ENCODE measurements at regions of chr18 and their contacts with region 1.

Region 1: DNA sequence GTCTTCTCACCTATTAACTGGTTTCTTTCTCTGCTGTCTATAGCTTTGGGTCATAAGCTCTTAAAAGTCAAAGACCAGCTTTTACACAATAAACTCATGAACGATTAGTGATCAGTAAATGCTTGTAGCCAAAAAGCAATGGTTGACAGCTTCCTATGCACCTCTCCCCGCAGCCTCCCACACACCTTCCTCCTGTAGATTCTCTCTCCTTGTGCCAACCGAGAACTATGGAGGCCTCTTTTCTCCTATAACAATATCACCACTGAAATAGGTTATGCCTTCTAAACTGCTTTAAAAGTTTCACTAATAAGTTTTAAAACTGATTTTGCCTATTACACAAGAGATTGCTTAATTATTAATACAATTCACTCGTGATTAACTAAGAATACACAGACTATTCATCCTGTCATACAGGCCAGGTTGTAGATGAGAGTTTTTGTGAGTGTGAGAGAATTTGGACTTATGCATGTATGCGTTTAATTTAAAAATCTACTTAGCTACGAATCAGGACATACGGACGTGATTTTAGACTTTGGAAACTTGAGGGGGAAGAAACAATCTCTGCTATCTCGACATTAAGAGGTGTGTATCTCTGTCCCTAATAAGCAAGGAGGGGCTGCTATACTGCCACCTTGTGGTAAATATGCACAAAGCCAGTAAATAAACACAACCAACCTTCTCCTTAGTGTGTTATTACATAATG is 229.1 kb upstream of the RBBP8 start:
- DNase-seq: peak; percentile 70 to 79 (median 74)
- ATAC-seq: peak; percentile 87
- H3K4me3 ChIP-seq: no peak overlapping the region
- H3K27ac ChIP-seq: no peak overlapping the region
- H3K4me1 ChIP-seq: peaks cover 0 to 4% of the 10 kb centered on the region in 2 experiments; a peak in 1 of 5 replicates
- H3K27me3 ChIP-seq: no peaks in the 10 kb centered on the region; a peak in 1 of 5 replicates
- CTCF ChIP-seq: peak; percentile 64 to 88 (median 72); a peak in 5 of 6 replicates
- EP300 ChIP-seq: no peak
- POLR2A ChIP-seq: no peak
- RAD21 ChIP-seq: peak; percentile 65 to 90

Region 2: GRCh38 chr18:22169007-22169864 is 534.8 kb before region 1 on chr18 and contains the start of gene GATA6:
- CTCF ChIA-PET with region 1: no interaction called
- POLR2A ChIA-PET with region 1: no interaction called
- in situ Hi-C with region 1: no loop called
- intact Hi-C with region 1: loop called (anchors 5 kb)
- DNase-seq: peak; percentile 73 to 80 (median 76)
- ATAC-seq: peak; percentile 93
- H3K4me3 ChIP-seq: peak within 1 kb of the TSS; percentile 45
- H3K27ac ChIP-seq: no peak within 1 kb of the TSS
- H3K4me1 ChIP-seq: peaks cover 11 to 34% of the 10 kb centered on the region in 2 experiments
- H3K27me3 ChIP-seq: peaks cover 45 to 66% of the 10 kb centered on the region in 2 experiments
- CTCF ChIP-seq: peak; percentile 54 to 79 (median 63)
- EP300 ChIP-seq: no peak
- POLR2A ChIP-seq: no peak
- RAD21 ChIP-seq: peak; percentile 45 to 78
- polyA plus RNA-seq, gene GATA6: 0.01 TPM in 1 of 2 experiments, not detected in the other

Region 3: DNA sequence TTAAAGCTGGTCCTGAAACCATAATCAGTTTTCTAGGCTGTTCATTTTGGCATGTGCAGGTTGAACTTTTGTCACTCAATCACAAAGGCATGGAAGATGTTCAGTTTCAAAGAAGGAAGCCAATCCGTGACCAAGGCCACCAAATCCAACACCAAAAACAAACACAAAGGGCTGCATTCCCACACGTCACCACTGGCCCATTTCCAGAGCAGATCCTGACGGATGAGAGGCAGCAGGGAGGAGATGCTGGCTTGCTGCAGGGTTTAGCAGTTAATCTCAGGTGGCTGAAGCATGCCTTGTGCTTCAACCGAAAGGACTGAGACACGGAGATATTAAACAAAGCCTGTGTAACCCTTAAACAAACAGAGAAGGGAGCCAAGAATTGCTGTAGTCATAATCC is 94.4 kb before region 1 on chr18:
- CTCF ChIA-PET with region 1: no interaction called
- POLR2A ChIA-PET with region 1: no interaction called
- in situ Hi-C with region 1: no loop called
- intact Hi-C with region 1: loop called (anchors 5 kb)
- DNase-seq: peak in 1 of 4 experiments; percentile 15
- ATAC-seq: no peak
- H3K4me3 ChIP-seq: no peak overlapping the region
- H3K27ac ChIP-seq: no peak overlapping the region
- H3K4me1 ChIP-seq: no peaks in the 10 kb centered on the region
- H3K27me3 ChIP-seq: peaks cover 22 to 26% of the 10 kb centered on the region in 2 experiments
- CTCF ChIP-seq: no peak
- EP300 ChIP-seq: no peak
- POLR2A ChIP-seq: no peak
- RAD21 ChIP-seq: no peak

Region 4: DNA sequence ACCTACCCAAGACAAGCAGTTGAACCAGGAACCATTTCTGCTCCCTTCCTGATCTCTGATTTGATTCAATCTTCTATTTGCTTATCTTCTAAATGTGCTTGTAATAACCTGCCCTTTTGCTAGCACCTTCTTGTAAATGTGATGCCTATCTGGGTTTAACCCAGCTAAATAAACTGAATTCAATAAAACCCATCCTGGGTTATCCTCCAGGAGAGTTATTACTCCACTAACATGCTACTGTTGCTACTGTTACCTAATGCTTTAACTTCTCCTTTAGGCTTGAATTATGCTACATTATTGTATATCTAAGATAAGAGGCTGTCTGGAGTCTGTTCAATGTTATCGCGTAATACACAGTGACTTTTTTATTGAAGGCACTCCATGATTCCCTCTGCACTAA is 79.9 kb before region 1 on chr18:
- CTCF ChIA-PET with region 1: no interaction called
- POLR2A ChIA-PET with region 1: no interaction called
- in situ Hi-C with region 1: loop called (anchors 5 kb)
- intact Hi-C with region 1: no loop called
- DNase-seq: no peak
- ATAC-seq: no peak
- H3K4me3 ChIP-seq: no peak overlapping the region
- H3K27ac ChIP-seq: no peak overlapping the region
- H3K4me1 ChIP-seq: no peaks in the 10 kb centered on the region
- H3K27me3 ChIP-seq: peaks cover 0 to 5% of the 10 kb centered on the region in 2 experiments; a peak in 1 of 5 replicates
- CTCF ChIP-seq: no peak
- EP300 ChIP-seq: no peak
- POLR2A ChIP-seq: no peak
- RAD21 ChIP-seq: no peak

Region 5: DNA sequence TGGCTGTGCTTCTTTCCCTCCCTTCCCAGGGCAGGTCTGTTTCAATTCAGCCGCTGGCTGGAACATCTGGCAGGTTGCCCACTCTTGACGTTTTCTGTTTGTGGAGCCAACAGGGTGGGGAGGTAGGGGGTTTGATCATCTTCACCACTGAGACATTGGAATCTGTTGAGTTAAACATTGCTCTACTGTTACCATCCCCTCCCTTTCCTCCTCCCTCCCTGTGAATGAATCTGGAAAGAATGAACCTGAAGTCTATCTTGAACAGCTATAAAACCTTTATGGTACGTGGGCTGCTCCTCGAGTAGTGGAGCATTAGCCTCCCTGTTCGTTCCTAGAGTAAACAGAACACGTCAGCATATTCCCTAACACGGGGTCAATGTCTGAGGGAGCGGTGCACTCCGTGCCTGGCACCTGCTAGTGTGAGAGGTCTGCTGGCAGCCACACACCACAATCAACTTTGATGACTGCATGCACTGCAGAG is 20.8 kb before region 1 on chr18:
- CTCF ChIA-PET with region 1: no interaction called
- POLR2A ChIA-PET with region 1: no interaction called
- in situ Hi-C with region 1: no loop called
- intact Hi-C with region 1: no loop called
- DNase-seq: peak in 1 of 4 experiments; percentile 18
- ATAC-seq: no peak; the same call in 2 of the 3 replicates
- H3K4me3 ChIP-seq: no peak overlapping the region
- H3K27ac ChIP-seq: no peak overlapping the region
- H3K4me1 ChIP-seq: no peaks in the 10 kb centered on the region; a peak in 1 of 5 replicates
- H3K27me3 ChIP-seq: peaks cover 0 to 9% of the 10 kb centered on the region in 2 experiments; a peak in 3 of 5 replicates
- CTCF ChIP-seq: no peak
- EP300 ChIP-seq: no peak
- POLR2A ChIP-seq: no peak
- RAD21 ChIP-seq: no peak